B cell (primary cell): ENCODE measurements at regions of chr6 and their contacts with region 1.

Region 1: DNA sequence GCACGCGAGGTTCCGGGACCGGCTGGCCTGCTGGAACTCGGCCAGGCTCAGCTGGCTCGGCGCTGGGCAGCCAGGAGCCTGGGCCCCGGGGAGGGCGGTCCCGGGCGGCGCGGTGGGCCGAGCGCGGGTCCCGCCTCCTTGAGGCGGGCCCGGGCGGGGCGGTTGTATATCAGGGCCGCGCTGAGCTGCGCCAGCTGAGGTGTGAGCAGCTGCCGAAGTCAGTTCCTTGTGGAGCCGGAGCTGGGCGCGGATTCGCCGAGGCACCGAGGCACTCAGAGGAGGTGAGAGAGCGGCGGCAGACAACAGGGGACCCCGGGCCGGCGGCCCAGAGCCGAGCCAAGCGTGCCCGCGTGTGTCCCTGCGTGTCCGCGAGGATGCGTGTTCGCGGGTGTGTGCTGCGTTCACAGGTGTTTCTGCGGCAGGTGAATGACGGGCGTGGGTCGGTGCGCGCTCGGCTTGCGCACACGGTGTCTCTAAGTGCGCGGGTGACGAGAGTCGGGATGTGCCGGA is at the start of gene CDKN1A:
- DNase-seq: peak; percentile 92
- ATAC-seq: peak; percentile 51
- H3K4me3 ChIP-seq: peak within 1 kb of the TSS; percentile 55 to 98 (median 71)
- H3K4me3 Mint-ChIP-seq: peak within 1 kb of the TSS; percentile 99
- H3K27ac ChIP-seq: peak within 1 kb of the TSS; percentile 97 to 100
- H3K27ac Mint-ChIP-seq: peak within 1 kb of the TSS; percentile 88
- H3K4me1 ChIP-seq: peaks cover 33 to 48% of the 10 kb centered on the region in 2 donors
- H3K4me1 Mint-ChIP-seq: peaks cover 41% of the 10 kb centered on the region
- H3K27me3 ChIP-seq: no peaks in the 10 kb centered on the region
- H3K27me3 Mint-ChIP-seq: no peaks in the 10 kb centered on the region
- CTCF ChIP-seq: no peak
- total RNA-seq, gene CDKN1A: 45.5 and 47.2 TPM in 2 replicates

Region 2: GRCh38 chr6:35640017-35640664 is 1038.4 kb before region 1 on chr6:
- CTCF ChIA-PET with region 1: no interaction called
- POLR2A ChIA-PET with region 1: no interaction called
- intact Hi-C with region 1: no loop called
- DNase-seq: no peak
- ATAC-seq: no peak
- H3K4me3 ChIP-seq: no peak overlapping the region
- H3K4me3 Mint-ChIP-seq: no peak overlapping the region
- H3K27ac ChIP-seq: no peak overlapping the region
- H3K27ac Mint-ChIP-seq: no peak overlapping the region
- H3K4me1 ChIP-seq: no peaks in the 10 kb centered on the region
- H3K4me1 Mint-ChIP-seq: no peaks in the 10 kb centered on the region
- H3K27me3 ChIP-seq: no peaks in the 10 kb centered on the region
- H3K27me3 Mint-ChIP-seq: no peaks in the 10 kb centered on the region
- CTCF ChIP-seq: no peak

Region 3: DNA sequence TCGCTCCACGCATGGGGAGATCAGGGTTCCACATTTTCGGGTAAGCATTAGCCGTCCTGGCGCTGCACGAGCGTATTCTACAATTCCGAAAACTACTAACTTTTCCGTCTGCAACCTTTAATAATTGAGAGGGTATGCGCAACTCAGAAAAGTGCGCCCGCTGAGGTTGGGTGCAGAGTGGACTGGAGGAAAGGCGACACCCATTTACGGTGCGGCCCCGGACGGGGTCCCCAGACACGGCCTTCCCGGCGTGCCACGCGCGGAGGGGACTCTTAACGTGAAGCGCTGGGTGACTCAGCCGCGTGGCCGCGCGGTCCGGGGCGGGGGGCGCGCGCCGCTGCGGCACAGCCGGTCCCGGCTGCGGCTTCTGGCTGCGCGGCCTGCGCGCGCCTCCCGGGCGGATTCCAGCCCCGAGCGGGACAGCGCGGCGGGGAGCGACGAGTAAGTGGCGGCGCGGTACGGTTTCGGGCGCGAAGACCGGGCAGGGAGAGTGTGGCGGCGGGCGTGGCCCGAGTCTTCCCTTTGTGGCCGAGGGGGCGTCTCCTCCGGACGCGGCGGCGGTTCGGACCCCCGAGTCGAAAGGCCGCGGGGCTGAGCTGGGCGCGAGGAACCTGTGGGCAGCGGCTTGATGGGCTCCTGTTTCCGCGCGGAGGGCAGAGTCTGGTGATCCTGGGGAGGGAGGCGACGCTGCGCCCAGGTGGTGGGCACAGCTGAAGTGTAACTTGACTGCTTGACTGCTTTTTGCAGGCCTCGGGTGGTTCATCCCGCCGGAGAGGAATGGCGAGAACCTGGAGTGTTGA is 235.7 kb before region 1 on chr6 and contains the starts of genes KCTD20 and PXT1:
- CTCF ChIA-PET with region 1: no interaction called
- POLR2A ChIA-PET with region 1: no interaction called
- intact Hi-C with region 1: loop called (anchors 5 kb)
- DNase-seq: peak; percentile 88
- ATAC-seq: peak; percentile 87
- H3K4me3 ChIP-seq: peak within 1 kb of the TSS; percentile 80 to 97 (median 89)
- H3K4me3 Mint-ChIP-seq: peak within 1 kb of the TSS; percentile 98
- H3K27ac ChIP-seq: peak within 1 kb of the TSS; percentile 76 to 91
- H3K27ac Mint-ChIP-seq: peak within 1 kb of the TSS; percentile 96
- H3K4me1 ChIP-seq: peaks cover 24 to 26% of the 10 kb centered on the region in 2 donors
- H3K4me1 Mint-ChIP-seq: peaks cover 35% of the 10 kb centered on the region
- H3K27me3 ChIP-seq: no peaks in the 10 kb centered on the region
- H3K27me3 Mint-ChIP-seq: no peaks in the 10 kb centered on the region
- CTCF ChIP-seq: no peak
- total RNA-seq, gene KCTD20: 37.5 and 44.3 TPM in 2 replicates
- total RNA-seq, gene PXT1: 0.27 and 0.52 TPM in 2 replicates

Region 4: DNA sequence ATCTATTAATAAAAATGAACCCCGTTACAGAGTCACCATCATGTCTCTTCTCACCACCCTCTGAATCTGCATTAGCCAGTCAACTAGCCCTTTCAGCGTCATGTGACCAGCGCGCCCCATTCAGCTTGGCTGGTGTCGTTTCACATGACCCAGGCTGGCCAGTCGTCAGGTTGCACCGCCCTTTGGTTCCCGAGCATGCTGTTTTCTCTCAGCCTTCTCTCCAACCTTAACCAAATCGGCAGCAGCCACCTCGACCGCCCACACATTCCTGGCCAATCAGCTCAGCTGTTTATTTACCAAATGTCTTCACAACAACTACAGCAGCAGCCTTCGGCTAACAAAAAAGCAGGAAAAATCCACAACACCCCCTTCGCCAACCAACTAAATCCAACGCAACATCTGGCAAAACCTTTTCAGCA is 78.8 kb before region 1 on chr6:
- CTCF ChIA-PET with region 1: interaction called, 3 read pairs
- POLR2A ChIA-PET with region 1: interaction called, 10 read pairs
- intact Hi-C with region 1: loop called (anchors 1 kb)
- DNase-seq: no peak
- ATAC-seq: no peak
- H3K4me3 ChIP-seq: no peak overlapping the region
- H3K4me3 Mint-ChIP-seq: peak overlapping the region; percentile 41
- H3K27ac ChIP-seq: no peak overlapping the region
- H3K27ac Mint-ChIP-seq: peak overlapping the region; percentile 61
- H3K4me1 ChIP-seq: peaks cover 42% of the 10 kb centered on the region in 2 donors
- H3K4me1 Mint-ChIP-seq: peaks cover 70% of the 10 kb centered on the region
- H3K27me3 ChIP-seq: no peaks in the 10 kb centered on the region
- H3K27me3 Mint-ChIP-seq: no peaks in the 10 kb centered on the region
- CTCF ChIP-seq: no peak

Region 5: GRCh38 chr6:36692220-36692619 is 13.6 kb after region 1 on chr6:
- CTCF ChIA-PET with region 1: interaction called, 37 read pairs
- POLR2A ChIA-PET with region 1: interaction called, 12 read pairs
- intact Hi-C with region 1: loop called (anchors 1 kb)
- DNase-seq: peak; percentile 86
- ATAC-seq: peak; percentile 98
- H3K4me3 ChIP-seq: peak overlapping the region in 3 of 5 experiments; percentile 12 to 18 (median 16)
- H3K4me3 Mint-ChIP-seq: peak overlapping the region; percentile 75
- H3K27ac ChIP-seq: peak overlapping the region; percentile 90 to 96
- H3K27ac Mint-ChIP-seq: peak overlapping the region; percentile 97
- H3K4me1 ChIP-seq: peaks cover 76 to 81% of the 10 kb centered on the region in 2 donors
- H3K4me1 Mint-ChIP-seq: peaks cover 81% of the 10 kb centered on the region
- H3K27me3 ChIP-seq: no peaks in the 10 kb centered on the region
- H3K27me3 Mint-ChIP-seq: no peaks in the 10 kb centered on the region
- CTCF ChIP-seq: no peak

Region 6: DNA sequence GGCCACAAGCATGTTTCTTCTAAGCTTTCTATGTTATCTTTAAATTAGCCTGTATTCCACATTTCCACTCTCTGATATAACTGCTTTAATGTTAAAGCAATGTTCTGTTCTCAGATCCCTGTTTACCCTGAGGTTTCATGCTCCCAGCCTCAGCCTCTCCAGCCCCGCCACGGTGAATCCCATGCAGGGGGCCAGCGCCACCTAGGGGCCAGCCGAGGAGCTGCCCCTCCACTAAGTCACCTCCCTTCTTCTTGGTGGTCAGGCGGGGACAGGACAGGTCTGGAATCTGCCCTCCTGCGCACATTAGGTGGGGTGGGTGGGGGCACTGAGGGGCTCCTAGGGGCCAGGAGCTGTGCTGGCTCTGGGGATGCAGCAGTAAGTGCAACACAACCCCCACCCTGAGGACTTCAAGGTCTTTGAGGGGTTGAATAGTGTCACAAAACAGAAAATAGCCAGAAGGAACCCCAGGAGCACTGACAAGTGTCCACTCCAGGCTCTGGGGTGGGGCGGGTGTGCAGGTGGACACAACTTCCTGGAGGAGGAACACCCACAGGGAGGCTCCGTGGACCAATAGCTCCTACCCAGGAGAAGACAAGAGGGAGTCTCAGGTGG is 80.7 kb after region 1 on chr6:
- CTCF ChIA-PET with region 1: interaction called, 107 read pairs
- POLR2A ChIA-PET with region 1: interaction called, 28 read pairs
- intact Hi-C with region 1: loop called (anchors 2 kb)
- DNase-seq: peak; percentile 88
- ATAC-seq: peak; percentile 55
- H3K4me3 ChIP-seq: no peak overlapping the region
- H3K4me3 Mint-ChIP-seq: peak overlapping the region; percentile 66
- H3K27ac ChIP-seq: peak overlapping the region; percentile 32 to 95
- H3K27ac Mint-ChIP-seq: peak overlapping the region; percentile 85
- H3K4me1 ChIP-seq: peaks cover 48 to 61% of the 10 kb centered on the region in 2 donors
- H3K4me1 Mint-ChIP-seq: peaks cover 56% of the 10 kb centered on the region
- H3K27me3 ChIP-seq: no peaks in the 10 kb centered on the region
- H3K27me3 Mint-ChIP-seq: no peaks in the 10 kb centered on the region
- CTCF ChIP-seq: peak; percentile 96